Dorsolateral prefrontal cortex (tissue), 120 donors: ENCODE measurements at regions of chr5 and their contacts with region 1.

Region 1: DNA sequence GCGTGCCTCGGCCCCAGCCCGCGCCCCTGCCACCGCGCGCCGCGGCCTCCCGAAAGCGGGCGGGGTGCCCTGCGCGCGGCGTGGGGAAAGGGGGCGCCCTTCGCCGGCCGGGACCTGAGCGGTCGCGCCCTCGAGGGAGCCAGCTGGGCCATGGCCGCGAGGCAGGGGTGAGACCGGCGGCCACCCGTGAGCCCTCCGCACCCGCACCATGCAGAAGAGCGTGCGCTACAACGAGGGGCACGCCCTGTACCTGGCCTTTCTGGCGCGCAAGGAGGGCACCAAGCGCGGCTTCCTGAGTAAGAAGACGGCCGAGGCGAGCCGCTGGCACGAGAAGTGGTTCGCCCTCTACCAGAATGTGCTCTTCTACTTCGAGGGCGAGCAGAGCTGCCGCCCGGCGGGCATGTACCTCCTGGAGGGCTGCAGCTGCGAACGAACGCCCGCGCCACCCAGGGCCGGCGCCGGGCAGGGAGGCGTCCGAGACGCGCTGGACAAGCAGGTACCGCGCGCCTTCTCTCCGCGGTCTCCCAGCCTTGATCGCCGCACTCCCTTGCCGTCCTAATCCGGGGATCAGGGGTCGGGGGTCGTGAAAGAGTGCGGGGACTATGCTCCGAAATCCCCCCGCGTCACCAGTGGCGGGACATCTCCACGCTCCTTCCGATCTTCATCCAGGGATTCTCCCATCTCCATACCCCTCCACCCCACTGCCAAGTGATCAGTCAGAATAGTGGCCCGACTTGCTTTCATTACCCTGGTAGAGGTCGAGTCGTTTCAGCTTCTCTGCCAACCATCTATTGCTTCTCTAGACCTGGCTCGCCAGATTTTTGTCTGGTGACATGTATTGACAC is 590 bp downstream of the RASGRF2 start:
- DNase-seq: peak in 6 of 10 donors; percentile 45 to 74 (median 56)
- H3K4me3 ChIP-seq: peak overlapping the region; percentile 50 to 93 (median 75)
- H3K27ac ChIP-seq: peak overlapping the region; percentile 20 to 97 (median 92)
- H3K27me3 ChIP-seq: peaks cover 0 to 10% (median 0%) of the 10 kb centered on the region in 45 donors
- CTCF ChIP-seq: peak in 40 of 56 donors; percentile 8 to 66 (median 36)

Region 2: DNA sequence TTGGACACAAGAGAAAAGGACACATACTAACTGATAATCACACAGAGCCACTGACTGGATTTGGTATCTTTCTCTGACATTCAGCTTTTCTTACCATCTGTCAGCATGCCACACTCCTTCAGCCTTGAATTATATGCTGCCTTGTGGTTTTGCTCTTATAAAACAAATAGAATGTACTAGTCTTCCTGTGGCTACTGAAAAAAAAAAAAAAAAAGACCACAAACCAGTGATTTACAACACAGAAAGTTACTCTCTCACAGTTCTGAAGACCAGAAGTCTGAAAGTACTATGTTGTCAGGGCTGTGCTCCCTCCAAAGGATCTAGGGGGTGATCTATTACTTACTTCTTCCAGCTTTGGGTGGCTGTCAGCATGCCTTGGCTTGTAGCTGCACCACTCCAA is 843.3 kb before region 1 on chr5:
- intact Hi-C with region 1: no loop called
- DNase-seq: no peak
- H3K4me3 ChIP-seq: no peak overlapping the region
- H3K27ac ChIP-seq: no peak overlapping the region
- H3K27me3 ChIP-seq: no peaks in the 10 kb centered on the region
- CTCF ChIP-seq: no peak

Region 3: GRCh38 chr5:80697100-80697499 is 263.7 kb before region 1 on chr5:
- intact Hi-C with region 1: loop called in 1 of 2 experiments (anchors 10 kb)
- DNase-seq: no peak
- H3K4me3 ChIP-seq: no peak overlapping the region
- H3K27ac ChIP-seq: no peak overlapping the region
- H3K27me3 ChIP-seq: no peaks in the 10 kb centered on the region
- CTCF ChIP-seq: no peak

Region 4: DNA sequence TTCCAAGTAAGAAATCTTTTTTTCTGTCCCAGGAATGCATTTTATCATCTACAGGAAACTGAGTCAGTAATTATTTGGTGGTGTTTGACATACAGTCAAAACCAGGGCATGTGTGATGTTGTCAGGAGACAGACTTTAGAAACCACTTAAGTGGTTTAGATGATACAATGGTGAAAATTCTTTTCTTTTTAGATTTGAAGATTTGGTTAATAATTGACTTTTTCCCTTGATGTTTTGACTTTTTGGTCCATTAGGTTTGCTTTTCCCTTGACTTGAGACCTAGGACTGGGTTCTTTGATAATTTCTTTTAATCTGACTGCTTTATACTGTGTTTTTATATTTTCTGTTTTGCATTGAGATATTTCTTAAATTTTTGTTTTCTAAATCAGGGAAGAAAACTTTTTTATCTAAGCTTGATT is 84.6 kb after region 1 on chr5:
- intact Hi-C with region 1: loop called in 1 of 2 experiments (anchors 10 kb)
- DNase-seq: no peak
- H3K4me3 ChIP-seq: no peak overlapping the region
- H3K27ac ChIP-seq: peak overlapping the region in 57 of 59 donors; percentile 0 to 99 (median 86)
- H3K27me3 ChIP-seq: no peaks in the 10 kb centered on the region
- CTCF ChIP-seq: no peak

Region 5: GRCh38 chr5:81081461-81081835 is 120.7 kb after region 1 on chr5:
- intact Hi-C with region 1: loop called (anchors 2 to 10 kb)
- DNase-seq: peak in 5 of 10 donors; percentile 32 to 77 (median 55)
- H3K4me3 ChIP-seq: peak overlapping the region in 42 of 59 donors; percentile 3 to 53 (median 26)
- H3K27ac ChIP-seq: peak overlapping the region; percentile 76 to 99 (median 94)
- H3K27me3 ChIP-seq: no peaks in the 10 kb centered on the region
- CTCF ChIP-seq: no peak

Region 6: GRCh38 chr5:81105261-81105877 is 144.6 kb after region 1 on chr5:
- intact Hi-C with region 1: loop called in 1 of 2 experiments (anchors 5 kb)
- DNase-seq: no peak
- H3K4me3 ChIP-seq: no peak overlapping the region
- H3K27ac ChIP-seq: peak overlapping the region in 1 of 59 donors; percentile 31
- H3K27me3 ChIP-seq: no peaks in the 10 kb centered on the region
- CTCF ChIP-seq: no peak

Region 7: DNA sequence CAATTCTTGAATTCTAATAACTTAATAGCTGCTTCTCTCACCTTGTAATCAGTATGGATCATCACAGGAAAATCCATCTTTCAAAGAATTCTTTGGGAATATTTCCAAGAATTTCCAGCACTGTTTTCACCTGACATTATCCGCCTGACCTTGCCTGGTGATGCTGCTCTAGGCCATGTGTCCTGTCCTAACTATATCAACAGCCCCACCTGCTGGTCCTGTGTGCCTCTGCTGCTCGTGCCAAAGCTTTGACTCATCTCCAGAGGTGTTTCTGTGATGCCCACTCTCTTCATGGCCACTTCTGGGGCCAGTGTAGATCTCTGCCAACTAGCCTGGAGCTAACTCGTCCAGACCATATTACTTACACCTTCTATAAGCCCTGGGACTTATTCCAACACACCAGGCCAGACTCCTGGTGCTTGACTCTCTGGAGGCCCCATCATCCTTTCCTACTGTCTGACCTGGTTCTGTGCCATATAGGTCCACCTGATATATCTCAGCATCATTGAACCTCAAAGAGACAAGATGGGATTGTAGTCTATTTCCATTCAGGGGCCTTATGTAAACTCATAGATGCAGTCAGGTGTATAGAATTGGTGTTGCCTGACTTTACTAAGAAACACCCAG is 204.9 kb after region 1 on chr5:
- intact Hi-C with region 1: loop called in 1 of 2 experiments (anchors 2 kb)
- DNase-seq: peak; percentile 6 to 83 (median 63)
- H3K4me3 ChIP-seq: no peak overlapping the region
- H3K27ac ChIP-seq: peak overlapping the region in 7 of 59 donors; percentile 3 to 63 (median 11)
- H3K27me3 ChIP-seq: no peaks in the 10 kb centered on the region
- CTCF ChIP-seq: peak; percentile 30 to 80 (median 64)

Region 8: GRCh38 chr5:81194633-81195333 is 234.0 kb after region 1 on chr5:
- intact Hi-C with region 1: loop called in 1 of 2 experiments (anchors 5 kb)
- DNase-seq: peak; percentile 76 to 89 (median 83)
- H3K4me3 ChIP-seq: peak overlapping the region in 36 of 59 donors; percentile 0 to 42 (median 20)
- H3K27ac ChIP-seq: peak overlapping the region in 25 of 59 donors; percentile 2 to 73 (median 29)
- H3K27me3 ChIP-seq: no peaks in the 10 kb centered on the region
- CTCF ChIP-seq: peak; percentile 80 to 99 (median 95)